PC-9 (cell line): ENCODE measurements at regions of chr10 and their contacts with region 1.

Region 1: GRCh38 chr10:102450194-102450938 is 977 bp downstream of the C10orf95 start:
- DNase-seq: peak; percentile 50 to 82
- H3K4me3 ChIP-seq: peak overlapping the region; percentile 77
- H3K27ac ChIP-seq: peak overlapping the region; percentile 59
- H3K4me1 ChIP-seq: peaks cover 17% of the 10 kb centered on the region
- H3K27me3 ChIP-seq: no peaks in the 10 kb centered on the region
- CTCF ChIP-seq: no peak

Region 2: DNA sequence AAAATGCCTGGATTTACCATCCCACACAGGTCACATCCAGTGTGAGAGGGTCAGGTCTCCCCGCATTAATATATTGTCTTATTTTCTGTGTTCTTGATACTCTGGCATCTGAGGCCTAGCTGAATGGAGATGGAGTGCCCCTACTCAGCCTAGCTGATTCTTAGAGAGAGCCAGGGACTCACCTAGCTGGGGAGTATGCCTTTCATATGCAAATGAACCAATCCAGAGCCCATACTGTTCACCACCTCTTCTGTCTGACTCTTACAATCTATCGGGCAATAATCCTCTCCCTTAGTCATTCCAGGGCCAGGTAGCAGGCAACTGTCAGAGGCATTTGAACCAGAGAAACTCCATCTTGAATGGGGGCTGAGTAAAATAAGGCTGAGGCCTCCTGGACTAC is 1267.4 kb before region 1 on chr10:
- CTCF ChIA-PET with region 1: no interaction called
- POLR2A ChIA-PET with region 1: interaction called, 16 read pairs
- intact Hi-C with region 1: no loop called
- DNase-seq: no peak
- H3K4me3 ChIP-seq: no peak overlapping the region
- H3K27ac ChIP-seq: no peak overlapping the region
- H3K4me1 ChIP-seq: no peaks in the 10 kb centered on the region
- H3K27me3 ChIP-seq: peaks cover 28% of the 10 kb centered on the region; the same call in 1 of the 2 replicates
- CTCF ChIP-seq: no peak

Region 3: DNA sequence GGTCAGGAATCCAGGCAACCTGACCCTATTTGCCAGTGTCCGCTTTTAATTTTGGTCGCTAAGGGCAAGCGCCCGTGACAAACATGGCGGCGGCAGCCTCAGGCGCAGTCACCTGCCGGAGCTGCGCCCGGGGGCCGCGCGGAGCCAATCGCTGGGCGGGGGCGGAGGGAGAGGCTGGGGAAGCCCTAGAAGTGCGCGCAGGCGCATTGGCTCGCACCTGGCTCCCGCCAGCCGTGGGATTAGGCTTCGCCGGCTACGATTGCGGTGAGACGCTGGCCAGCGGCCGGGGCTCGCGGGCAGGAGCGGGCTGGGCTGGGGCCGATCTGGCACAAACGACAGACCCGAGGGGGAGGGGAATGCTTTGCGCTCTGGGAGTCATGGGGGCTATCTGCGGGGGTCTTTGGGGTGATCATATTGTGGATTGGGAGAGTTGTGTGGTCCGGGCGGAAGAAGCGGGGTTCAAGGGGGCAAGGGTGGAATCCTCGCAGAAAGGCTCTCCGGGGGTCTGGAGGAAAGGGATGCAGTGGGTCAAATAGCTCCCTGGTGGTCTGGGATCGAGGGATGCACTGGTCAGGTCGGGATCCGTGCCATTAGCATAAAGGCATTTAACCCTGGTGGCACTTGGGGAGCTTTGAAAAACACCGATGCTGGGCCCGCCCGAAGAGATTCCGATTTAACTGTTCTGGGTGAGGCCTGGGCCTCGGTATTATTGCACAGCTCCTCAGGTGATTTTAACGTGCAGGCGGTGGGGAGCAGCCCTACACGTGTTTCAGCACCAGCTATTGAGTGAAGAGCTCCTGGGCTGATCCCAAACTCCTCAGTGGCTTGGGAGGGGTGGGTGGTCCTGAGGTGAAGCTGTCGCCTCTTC is 11.1 kb after region 1 on chr10:
- CTCF ChIA-PET with region 1: no interaction called
- POLR2A ChIA-PET with region 1: interaction called, 10 read pairs
- intact Hi-C with region 1: no loop called
- DNase-seq: peak; percentile 66 to 84
- H3K4me3 ChIP-seq: peak overlapping the region; percentile 64
- H3K27ac ChIP-seq: no peak overlapping the region
- H3K4me1 ChIP-seq: no peaks in the 10 kb centered on the region
- H3K27me3 ChIP-seq: no peaks in the 10 kb centered on the region
- CTCF ChIP-seq: no peak

Region 4: DNA sequence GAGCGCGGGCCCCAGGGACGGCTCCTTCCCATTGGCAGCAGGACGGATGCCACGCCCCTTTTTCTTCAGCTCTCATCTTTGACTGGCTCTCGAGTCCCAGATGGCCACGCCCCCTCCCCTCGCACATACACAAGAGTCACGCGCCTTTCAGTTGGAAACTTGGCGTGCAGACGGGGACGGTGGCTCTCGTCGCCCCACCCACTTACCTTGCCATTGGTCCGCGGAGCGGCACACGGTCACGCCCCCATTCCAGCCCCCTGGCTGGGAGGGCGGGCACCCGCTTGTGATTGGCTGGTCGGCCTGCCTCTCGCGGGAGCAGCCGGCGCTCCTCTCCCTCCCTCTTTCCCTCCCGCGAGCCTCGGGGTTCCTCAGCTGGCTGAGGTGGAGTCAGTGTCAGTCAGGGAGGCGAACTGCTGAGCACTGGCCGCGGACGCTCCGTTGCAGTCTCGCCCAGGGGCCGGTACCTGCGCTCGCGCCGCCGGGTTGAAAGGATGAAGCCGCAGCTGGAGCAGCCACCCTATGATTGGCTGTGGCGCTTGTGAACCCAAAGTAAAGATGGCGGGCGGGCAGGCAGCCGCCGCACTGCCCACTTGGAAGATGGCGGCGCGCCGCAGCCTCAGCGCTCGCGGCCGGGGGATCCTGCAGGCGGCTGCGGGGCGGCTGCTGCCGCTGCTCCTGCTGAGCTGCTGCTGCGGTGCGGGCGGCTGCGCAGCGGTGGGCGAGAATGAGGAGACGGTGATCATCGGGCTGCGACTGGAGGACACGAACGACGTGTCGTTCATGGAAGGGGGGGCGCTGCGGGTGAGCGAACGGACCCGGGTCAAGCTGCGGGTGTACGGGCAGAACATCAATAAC is 467.8 kb after region 1 on chr10 and contains the start of gene CNNM2:
- CTCF ChIA-PET with region 1: no interaction called
- POLR2A ChIA-PET with region 1: no interaction called
- intact Hi-C with region 1: no loop called
- DNase-seq: peak; percentile 95 to 96
- H3K4me3 ChIP-seq: peak within 1 kb of the TSS; percentile 96
- H3K27ac ChIP-seq: 0 out of 2 replicates have a peak within 1 kb of the TSS, but pooled peaks have one; percentile 41
- H3K4me1 ChIP-seq: peaks cover 36% of the 10 kb centered on the region
- H3K27me3 ChIP-seq: no peaks in the 10 kb centered on the region
- CTCF ChIP-seq: no peak
- total RNA-seq, gene CNNM2: 7.4 and 8.8 TPM in 2 replicates